ENCODE measurements at regions of chr6 and their contacts with region 1.

Region 1: GRCh38 chr6:79869600-79870084 is 77.7 kb downstream of the ELOVL4 start:
- DNase-seq: peak; percentile 21
- H3K4me3 ChIP-seq: peak overlapping the region; percentile 31
- H3K27ac ChIP-seq: no peak overlapping the region
- H3K27me3 ChIP-seq: no peaks in the 10 kb centered on the region
- CTCF ChIP-seq: peak; percentile 96

Region 2: GRCh38 chr6:79782792-79783580 is 86.7 kb before region 1 on chr6:
- CTCF ChIA-PET with region 1: interaction called, 34 read pairs
- POLR2A ChIA-PET with region 1: no interaction called
- DNase-seq: no peak
- H3K4me3 ChIP-seq: no peak overlapping the region
- H3K27ac ChIP-seq: no peak overlapping the region
- H3K27me3 ChIP-seq: no peaks in the 10 kb centered on the region
- CTCF ChIP-seq: no peak

Region 3: GRCh38 chr6:79855147-79855546 is 14.5 kb before region 1 on chr6:
- CTCF ChIA-PET with region 1: interaction called, 19 read pairs
- POLR2A ChIA-PET with region 1: no interaction called
- DNase-seq: no peak
- H3K4me3 ChIP-seq: no peak overlapping the region
- H3K27ac ChIP-seq: no peak overlapping the region
- H3K27me3 ChIP-seq: no peaks in the 10 kb centered on the region
- CTCF ChIP-seq: no peak

Region 4: GRCh38 chr6:79911992-79912391 is 42.4 kb after region 1 on chr6:
- CTCF ChIA-PET with region 1: interaction called, 21 read pairs
- POLR2A ChIA-PET with region 1: no interaction called
- DNase-seq: no peak
- H3K4me3 ChIP-seq: no peak overlapping the region
- H3K27ac ChIP-seq: no peak overlapping the region
- H3K27me3 ChIP-seq: no peaks in the 10 kb centered on the region
- CTCF ChIP-seq: no peak

Region 5: GRCh38 chr6:80094017-80094416 is 224.4 kb after region 1 on chr6:
- CTCF ChIA-PET with region 1: interaction called, 16 read pairs
- POLR2A ChIA-PET with region 1: no interaction called
- DNase-seq: no peak
- H3K4me3 ChIP-seq: no peak overlapping the region
- H3K27ac ChIP-seq: no peak overlapping the region
- H3K27me3 ChIP-seq: no peaks in the 10 kb centered on the region
- CTCF ChIP-seq: peak; percentile 56

Measured in AG04450 (cell line).